ENCODE measurements at regions of chr17 and their contacts with region 1.

Region 1: DNA sequence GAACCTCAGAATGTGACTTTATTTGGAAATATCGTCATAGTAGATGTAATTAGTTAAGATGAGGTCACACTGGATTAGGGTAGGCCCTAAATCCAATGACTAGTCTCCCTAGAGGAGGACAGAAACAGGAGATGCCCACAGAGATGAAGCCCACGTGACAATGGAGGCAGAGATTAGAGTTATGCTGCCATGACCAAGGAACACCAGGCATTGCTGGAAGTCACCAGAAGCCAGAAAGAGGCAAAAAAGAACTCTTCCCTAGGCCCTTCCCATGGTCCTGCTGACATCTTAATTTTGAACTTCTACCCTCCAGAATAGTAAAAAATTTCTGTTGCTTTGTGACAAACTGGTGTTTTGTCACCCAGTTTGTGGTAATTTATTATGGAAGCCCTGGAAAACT is 49.6 kb downstream of the IKZF3 start:
- DNase-seq: no peak
- ATAC-seq: no peak
- H3K4me3 ChIP-seq: no peak overlapping the region
- H3K27ac ChIP-seq: no peak overlapping the region
- H3K4me1 ChIP-seq: no peaks in the 10 kb centered on the region
- H3K27me3 ChIP-seq: peaks cover 9% of the 10 kb centered on the region
- CTCF ChIP-seq: no peak

Region 2: DNA sequence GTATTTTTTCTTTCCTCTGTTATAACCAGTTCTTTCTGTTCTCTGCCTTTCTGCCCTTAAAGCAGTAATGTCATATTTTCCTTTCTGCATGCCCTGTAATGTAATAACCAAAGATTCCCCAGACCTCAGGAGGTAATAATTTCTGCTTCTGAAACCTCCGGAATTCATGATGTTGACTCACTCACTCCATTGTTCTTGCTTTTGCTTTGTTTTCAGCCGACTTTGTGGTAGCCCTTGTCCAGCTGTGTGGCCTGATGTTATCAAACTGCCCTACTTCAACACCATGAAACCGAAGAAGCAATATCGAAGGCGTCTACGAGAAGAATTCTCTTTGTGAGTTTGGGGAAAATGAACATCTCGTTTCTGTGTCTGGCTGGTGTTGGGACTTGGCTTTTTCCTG is 297.3 kb before region 1 on chr17:
- CTCF ChIA-PET with region 1: no interaction called
- POLR2A ChIA-PET with region 1: no interaction called
- in situ Hi-C with region 1: no loop called
- intact Hi-C with region 1: no loop called
- DNase-seq: no peak
- ATAC-seq: no peak
- H3K4me3 ChIP-seq: no peak overlapping the region
- H3K27ac ChIP-seq: no peak overlapping the region
- H3K4me1 ChIP-seq: no peaks in the 10 kb centered on the region
- H3K27me3 ChIP-seq: no peaks in the 10 kb centered on the region
- CTCF ChIP-seq: no peak

Region 3: DNA sequence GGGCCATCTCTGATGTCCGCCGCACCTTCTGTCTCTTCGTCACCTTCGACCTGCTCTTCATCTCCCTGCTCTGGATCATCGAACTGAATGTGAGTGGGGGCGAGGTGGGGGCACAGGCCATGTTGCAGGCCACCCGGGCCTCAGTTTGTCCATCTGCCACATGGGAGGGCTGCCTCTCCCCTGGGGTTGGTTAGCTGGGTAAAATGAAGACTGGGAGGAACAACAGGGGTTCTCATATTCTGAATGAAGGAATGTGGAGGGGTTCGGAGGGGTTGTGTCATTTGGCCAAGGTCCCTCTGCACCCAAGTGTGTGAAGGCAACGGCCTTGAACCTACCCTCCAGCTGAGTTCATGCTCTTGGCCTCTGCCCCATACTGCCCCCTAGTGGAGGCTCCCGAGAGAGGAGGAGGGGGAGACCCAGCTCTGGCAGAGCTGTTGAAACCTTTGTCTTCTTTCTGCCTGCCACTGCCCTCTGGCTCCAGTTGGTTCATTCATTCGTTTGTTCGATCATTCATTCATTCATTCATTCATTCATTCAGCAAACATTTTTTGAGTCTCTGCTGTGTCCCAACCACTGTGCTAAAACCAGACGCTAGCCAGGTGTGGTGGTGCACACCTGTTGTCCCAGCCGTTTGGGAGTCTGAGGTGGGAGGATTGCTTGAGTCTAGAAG is 160.7 kb before region 1 on chr17:
- CTCF ChIA-PET with region 1: no interaction called
- POLR2A ChIA-PET with region 1: no interaction called
- in situ Hi-C with region 1: no loop called
- intact Hi-C with region 1: no loop called
- DNase-seq: no peak
- ATAC-seq: peak; percentile 74
- H3K4me3 ChIP-seq: no peak overlapping the region
- H3K27ac ChIP-seq: no peak overlapping the region
- H3K4me1 ChIP-seq: peaks cover 11% of the 10 kb centered on the region; the same call in 1 of the 2 replicates
- H3K27me3 ChIP-seq: no peaks in the 10 kb centered on the region
- CTCF ChIP-seq: peak; percentile 86

Region 4: GRCh38 chr17:39800540-39800939 is 14.0 kb before region 1 on chr17:
- CTCF ChIA-PET with region 1: no interaction called
- POLR2A ChIA-PET with region 1: interaction called, 11 read pairs
- in situ Hi-C with region 1: no loop called
- intact Hi-C with region 1: no loop called
- DNase-seq: no peak
- ATAC-seq: no peak
- H3K4me3 ChIP-seq: no peak overlapping the region
- H3K27ac ChIP-seq: no peak overlapping the region
- H3K4me1 ChIP-seq: no peaks in the 10 kb centered on the region
- H3K27me3 ChIP-seq: peaks cover 9% of the 10 kb centered on the region; the same call in 1 of the 2 replicates
- CTCF ChIP-seq: no peak

Measured in Panc1 (cell line).